Activated CD8-positive, alpha-beta T cell treated with anti-CD3 and anti-CD28 coated beads for 36 hours (primary cell): ENCODE measurements at regions of chr12 and their contacts with region 1.

Region 1: DNA sequence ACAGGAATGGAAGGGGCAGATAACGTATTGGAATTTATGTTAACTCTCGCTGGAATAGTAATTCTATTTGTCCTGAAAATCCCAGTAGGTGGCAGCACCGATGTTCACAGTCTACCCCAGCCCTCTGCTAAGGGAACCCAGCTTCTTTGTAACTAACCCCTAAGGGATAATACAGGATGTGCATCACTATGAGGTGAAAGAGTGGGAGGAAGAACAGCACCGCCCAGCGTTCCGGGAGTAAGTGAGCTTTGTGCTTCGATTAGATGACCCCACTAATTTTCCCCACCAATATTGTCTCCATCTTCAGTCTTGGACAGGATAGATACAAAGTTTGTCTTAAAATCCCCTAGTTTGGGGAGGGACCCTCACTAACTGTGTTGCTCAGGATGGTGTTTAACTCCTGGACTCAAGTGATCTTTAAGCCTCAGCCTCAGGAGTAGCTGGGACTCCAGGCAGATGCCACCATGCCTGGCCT is 2.7 kb downstream of the SLC2A3 start:
- DNase-seq: peak; percentile 86
- ATAC-seq: peak; percentile 78
- H3K4me3 Mint-ChIP-seq: no peak overlapping the region
- H3K27ac Mint-ChIP-seq: no peak overlapping the region
- H3K4me1 Mint-ChIP-seq: peaks cover 33% of the 10 kb centered on the region
- H3K27me3 Mint-ChIP-seq: no peaks in the 10 kb centered on the region
- CTCF ChIP-seq: peak; percentile 79

Region 2: GRCh38 chr12:7411343-7411742 is 521.9 kb before region 1 on chr12:
- CTCF ChIA-PET with region 1: no interaction called
- POLR2A ChIA-PET with region 1: no interaction called
- intact Hi-C with region 1: no loop called
- DNase-seq: no peak
- ATAC-seq: no peak
- H3K4me3 Mint-ChIP-seq: no peak overlapping the region
- H3K27ac Mint-ChIP-seq: no peak overlapping the region
- H3K4me1 Mint-ChIP-seq: no peaks in the 10 kb centered on the region
- H3K27me3 Mint-ChIP-seq: peaks cover 5% of the 10 kb centered on the region
- CTCF ChIP-seq: no peak

Region 3: DNA sequence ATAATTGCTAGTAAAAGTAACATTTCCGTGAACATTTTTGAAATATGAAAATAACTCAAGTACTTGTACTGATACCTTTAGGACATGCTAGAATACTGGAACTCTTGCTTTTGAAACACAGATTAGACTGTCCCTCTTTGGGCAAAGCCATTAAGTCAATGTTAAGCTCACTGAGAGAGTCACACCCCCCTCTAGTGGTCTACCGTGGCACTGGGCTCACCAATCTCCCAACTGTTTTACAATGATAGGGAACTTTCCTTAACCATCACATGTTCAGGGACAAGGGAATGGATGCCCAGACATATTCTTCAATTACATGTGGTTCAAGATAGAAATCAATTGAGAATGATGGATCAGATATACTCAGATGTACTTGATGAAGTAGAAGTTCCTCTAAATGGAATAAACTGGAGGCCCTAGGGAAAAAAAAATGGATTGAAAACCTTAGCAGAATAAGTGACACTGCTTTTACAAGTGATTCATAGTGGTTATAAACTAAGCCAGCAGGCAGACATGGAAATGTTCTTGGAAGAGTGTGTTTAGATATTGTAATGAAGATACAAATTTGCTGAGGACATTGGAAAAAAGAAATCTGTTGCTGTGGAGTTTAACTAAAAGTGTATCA is 126.3 kb before region 1 on chr12:
- CTCF ChIA-PET with region 1: no interaction called
- POLR2A ChIA-PET with region 1: no interaction called
- intact Hi-C with region 1: no loop called
- DNase-seq: peak; percentile 82
- ATAC-seq: peak; percentile 61
- H3K4me3 Mint-ChIP-seq: no peak overlapping the region
- H3K27ac Mint-ChIP-seq: no peak overlapping the region
- H3K4me1 Mint-ChIP-seq: no peaks in the 10 kb centered on the region
- H3K27me3 Mint-ChIP-seq: peaks cover 2% of the 10 kb centered on the region
- CTCF ChIP-seq: peak; percentile 90

Region 4: GRCh38 chr12:7877420-7877819 is 55.9 kb before region 1 on chr12:
- CTCF ChIA-PET with region 1: no interaction called
- POLR2A ChIA-PET with region 1: no interaction called
- intact Hi-C with region 1: no loop called
- DNase-seq: no peak
- ATAC-seq: no peak
- H3K4me3 Mint-ChIP-seq: no peak overlapping the region
- H3K27ac Mint-ChIP-seq: no peak overlapping the region
- H3K4me1 Mint-ChIP-seq: no peaks in the 10 kb centered on the region
- H3K27me3 Mint-ChIP-seq: peaks cover 10% of the 10 kb centered on the region
- CTCF ChIP-seq: no peak

Region 5: GRCh38 chr12:7916936-7917335 is 16.4 kb before region 1 on chr12:
- CTCF ChIA-PET with region 1: interaction called, 22 read pairs
- POLR2A ChIA-PET with region 1: interaction called, 14 read pairs
- intact Hi-C with region 1: no loop called
- DNase-seq: no peak
- ATAC-seq: no peak
- H3K4me3 Mint-ChIP-seq: no peak overlapping the region
- H3K27ac Mint-ChIP-seq: no peak overlapping the region
- H3K4me1 Mint-ChIP-seq: peaks cover 26% of the 10 kb centered on the region
- H3K27me3 Mint-ChIP-seq: no peaks in the 10 kb centered on the region
- CTCF ChIP-seq: no peak

Region 6: DNA sequence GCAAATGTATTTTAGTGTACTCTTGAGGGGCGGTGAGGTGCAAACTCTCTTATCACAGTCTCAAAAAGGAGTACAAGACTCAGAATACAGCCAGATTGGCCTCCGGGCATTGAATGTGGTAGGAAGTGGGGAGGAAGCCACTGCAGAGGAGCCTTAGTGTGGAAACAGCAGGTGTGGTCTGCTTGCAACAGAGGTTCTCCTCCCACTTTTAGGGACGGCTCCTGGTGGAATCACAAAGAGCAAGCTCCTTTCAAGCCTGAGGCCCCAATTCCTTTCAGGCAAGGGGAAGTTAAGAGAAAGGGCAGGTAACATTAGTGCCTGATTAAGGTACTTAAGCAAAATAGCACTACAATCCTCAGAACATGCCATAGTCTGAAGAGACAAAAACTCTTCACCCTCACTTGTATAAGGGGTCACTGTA is 26.4 kb after region 1 on chr12:
- CTCF ChIA-PET with region 1: interaction called, 162 read pairs
- POLR2A ChIA-PET with region 1: interaction called, 142 read pairs
- intact Hi-C with region 1: loop called (anchors 1 kb)
- DNase-seq: peak; percentile 63
- ATAC-seq: peak; percentile 43
- H3K4me3 Mint-ChIP-seq: peak overlapping the region; percentile 97
- H3K27ac Mint-ChIP-seq: peak overlapping the region; percentile 98
- H3K4me1 Mint-ChIP-seq: peaks cover 35% of the 10 kb centered on the region
- H3K27me3 Mint-ChIP-seq: no peaks in the 10 kb centered on the region
- CTCF ChIP-seq: no peak

Region 7: GRCh38 chr12:7970475-7971252 is 37.4 kb after region 1 on chr12:
- CTCF ChIA-PET with region 1: interaction called, 162 read pairs
- POLR2A ChIA-PET with region 1: interaction called, 62 read pairs
- intact Hi-C with region 1: loop called (anchors 5 kb)
- DNase-seq: peak; percentile 92
- ATAC-seq: peak; percentile 87
- H3K4me3 Mint-ChIP-seq: peak overlapping the region; percentile 76
- H3K27ac Mint-ChIP-seq: peak overlapping the region; percentile 94
- H3K4me1 Mint-ChIP-seq: peaks cover 26% of the 10 kb centered on the region
- H3K27me3 Mint-ChIP-seq: no peaks in the 10 kb centered on the region
- CTCF ChIP-seq: peak; percentile 47

Region 8: DNA sequence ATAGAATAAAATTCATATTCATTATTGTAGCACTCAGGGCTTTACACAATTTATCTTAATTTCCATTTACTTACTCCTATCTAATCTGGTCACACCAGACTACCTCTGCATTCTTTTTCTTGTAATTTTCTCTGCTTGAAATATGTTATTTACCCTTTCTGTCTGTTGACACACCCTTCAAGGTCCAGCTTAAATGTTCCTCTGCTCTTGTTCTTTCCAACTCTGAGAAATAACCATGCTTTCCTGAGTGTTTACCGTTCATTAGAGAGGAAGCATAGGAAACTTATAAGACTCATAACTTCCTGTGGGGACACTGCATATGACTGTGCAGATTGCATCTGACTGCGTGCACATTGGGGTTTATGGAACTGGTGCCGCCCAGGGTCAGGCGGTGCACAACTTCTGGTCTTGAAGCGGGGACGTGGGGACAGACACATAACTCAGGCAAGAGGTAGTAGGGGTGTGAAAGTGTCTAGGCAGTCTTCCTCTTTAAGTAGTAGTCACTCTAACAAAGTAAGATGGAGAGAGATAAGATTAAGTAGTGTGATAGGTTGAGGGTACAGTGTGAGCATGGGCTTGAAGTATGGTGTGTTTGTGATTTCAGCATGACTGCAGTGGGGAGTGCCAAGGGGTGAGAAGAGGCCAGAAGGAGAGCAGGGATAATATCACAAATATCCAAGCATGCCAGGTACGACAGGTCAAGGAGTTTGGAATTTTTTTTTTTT is 56.7 kb after region 1 on chr12:
- CTCF ChIA-PET with region 1: interaction called, 84 read pairs
- POLR2A ChIA-PET with region 1: interaction called, 49 read pairs
- intact Hi-C with region 1: loop called (anchors 1 kb)
- DNase-seq: peak; percentile 93
- ATAC-seq: peak; percentile 94
- H3K4me3 Mint-ChIP-seq: peak overlapping the region; percentile 51
- H3K27ac Mint-ChIP-seq: peak overlapping the region; percentile 84
- H3K4me1 Mint-ChIP-seq: peaks cover 34% of the 10 kb centered on the region
- H3K27me3 Mint-ChIP-seq: no peaks in the 10 kb centered on the region
- CTCF ChIP-seq: no peak

Region 9: GRCh38 chr12:7995266-7995963 is 62.1 kb after region 1 on chr12:
- CTCF ChIA-PET with region 1: interaction called, 84 read pairs
- POLR2A ChIA-PET with region 1: interaction called, 49 read pairs
- intact Hi-C with region 1: loop called (anchors 1 kb)
- DNase-seq: peak; percentile 96
- ATAC-seq: peak; percentile 90
- H3K4me3 Mint-ChIP-seq: no peak overlapping the region
- H3K27ac Mint-ChIP-seq: no peak overlapping the region
- H3K4me1 Mint-ChIP-seq: peaks cover 22% of the 10 kb centered on the region
- H3K27me3 Mint-ChIP-seq: no peaks in the 10 kb centered on the region
- CTCF ChIP-seq: peak; percentile 82

Region 10: GRCh38 chr12:8012651-8013309 is 79.5 kb after region 1 on chr12:
- CTCF ChIA-PET with region 1: no interaction called
- POLR2A ChIA-PET with region 1: no interaction called
- intact Hi-C with region 1: no loop called
- DNase-seq: no peak
- ATAC-seq: no peak
- H3K4me3 Mint-ChIP-seq: no peak overlapping the region
- H3K27ac Mint-ChIP-seq: no peak overlapping the region
- H3K4me1 Mint-ChIP-seq: no peaks in the 10 kb centered on the region
- H3K27me3 Mint-ChIP-seq: peaks cover 13% of the 10 kb centered on the region
- CTCF ChIP-seq: no peak

Region 11: GRCh38 chr12:8045952-8046944 is 113.0 kb after region 1 on chr12:
- CTCF ChIA-PET with region 1: interaction called, 10 read pairs
- POLR2A ChIA-PET with region 1: no interaction called
- intact Hi-C with region 1: no loop called
- DNase-seq: peak; percentile 92
- ATAC-seq: peak; percentile 82
- H3K4me3 Mint-ChIP-seq: no peak overlapping the region
- H3K27ac Mint-ChIP-seq: no peak overlapping the region
- H3K4me1 Mint-ChIP-seq: peaks cover 15% of the 10 kb centered on the region
- H3K27me3 Mint-ChIP-seq: no peaks in the 10 kb centered on the region
- CTCF ChIP-seq: peak; percentile 90